OCI-LY7 (cell line): ENCODE measurements at regions of chr11 and their contacts with region 1.

Region 1: GRCh38 chr11:134139873-134140331 is 71.0 kb downstream of the JAM3 start:
- DNase-seq: peak; percentile 43
- H3K4me3 ChIP-seq: no peak overlapping the region
- H3K27ac ChIP-seq: no peak overlapping the region
- H3K4me1 ChIP-seq: no peaks in the 10 kb centered on the region
- CTCF ChIP-seq: peak; percentile 78

Region 2: DNA sequence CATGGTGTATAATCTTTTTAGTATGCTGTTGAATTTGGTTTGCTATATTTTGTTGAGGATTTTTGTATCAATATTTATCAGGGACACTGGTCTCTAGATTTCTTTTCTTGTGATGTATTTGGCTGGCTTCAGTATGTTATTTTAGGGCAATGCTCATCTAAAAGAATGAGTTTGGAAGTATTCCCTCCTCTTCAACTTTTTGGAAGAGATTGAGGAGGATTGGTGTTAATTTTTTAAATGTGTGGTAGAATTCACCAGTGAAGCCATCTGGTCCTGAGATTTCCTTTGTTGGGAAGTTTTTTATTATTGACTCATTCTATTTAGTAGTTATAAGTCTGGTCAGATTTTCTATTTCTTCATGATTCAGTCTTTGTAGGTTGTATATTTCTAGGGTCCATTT is 272.4 kb before region 1 on chr11:
- CTCF ChIA-PET with region 1: no interaction called
- POLR2A ChIA-PET with region 1: no interaction called
- intact Hi-C with region 1: no loop called
- DNase-seq: no peak
- H3K4me3 ChIP-seq: no peak overlapping the region
- H3K27ac ChIP-seq: no peak overlapping the region
- H3K4me1 ChIP-seq: no peaks in the 10 kb centered on the region
- CTCF ChIP-seq: no peak

Region 3: GRCh38 chr11:133927690-133928627 is 211.9 kb before region 1 on chr11:
- CTCF ChIA-PET with region 1: no interaction called
- POLR2A ChIA-PET with region 1: no interaction called
- intact Hi-C with region 1: loop called (anchors 5 kb)
- DNase-seq: peak; percentile 53
- H3K4me3 ChIP-seq: no peak overlapping the region
- H3K27ac ChIP-seq: no peak overlapping the region
- H3K4me1 ChIP-seq: no peaks in the 10 kb centered on the region
- CTCF ChIP-seq: peak; percentile 79

Region 4: DNA sequence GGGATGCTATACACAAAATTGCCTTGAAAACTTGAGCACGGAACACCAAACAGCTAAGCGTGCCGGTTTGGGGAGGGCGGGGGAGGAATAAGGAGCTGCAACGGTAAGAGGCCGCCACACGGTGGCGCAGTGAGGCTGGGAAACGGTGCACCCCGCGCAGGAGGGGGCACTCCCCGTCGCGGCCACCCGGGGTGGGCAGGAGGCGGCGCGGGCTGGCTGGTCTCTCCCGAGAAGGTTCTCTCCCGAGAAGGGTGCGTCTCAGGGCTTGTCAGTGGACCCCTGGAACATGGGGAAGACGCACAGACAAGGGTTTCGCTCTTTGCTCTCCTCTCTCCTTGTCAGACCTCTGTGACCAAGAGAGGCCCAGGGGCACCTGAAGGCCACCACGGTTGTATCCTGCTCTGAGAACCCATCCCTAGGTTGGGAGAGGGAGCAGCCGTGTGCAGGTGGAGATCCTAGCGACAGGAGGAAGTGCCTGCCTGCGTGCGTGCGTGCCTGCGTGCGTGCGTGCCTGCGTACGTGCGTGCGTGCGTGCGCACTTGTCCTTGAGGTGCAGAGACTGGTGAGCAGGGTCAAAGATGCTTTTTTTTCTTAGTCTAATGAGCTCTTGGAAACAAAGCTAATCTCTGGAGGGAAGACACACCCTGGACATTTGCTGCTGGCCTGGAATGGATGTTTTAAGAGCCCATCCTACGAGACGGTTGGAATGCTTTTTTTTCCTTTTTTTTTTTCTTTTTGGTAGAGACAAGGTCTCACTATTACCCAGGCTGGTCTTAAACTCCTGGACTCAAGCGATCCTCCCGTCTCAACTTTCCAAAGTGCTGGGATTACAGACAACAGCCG is 89.1 kb before region 1 on chr11:
- CTCF ChIA-PET with region 1: interaction called, 3 read pairs
- POLR2A ChIA-PET with region 1: no interaction called
- intact Hi-C with region 1: loop called (anchors 1 kb)
- DNase-seq: peak; percentile 62
- H3K4me3 ChIP-seq: no peak overlapping the region
- H3K27ac ChIP-seq: no peak overlapping the region
- H3K4me1 ChIP-seq: no peaks in the 10 kb centered on the region
- CTCF ChIP-seq: peak; percentile 87